Mammary epithelial cell (primary cell): ENCODE measurements at regions of chr12 and their contacts with region 1.

Region 1: GRCh38 chr12:69359531-69360347 is at the start of gene YEATS4:
- DNase-seq: peak; percentile 98
- H3K4me3 ChIP-seq: peak within 1 kb of the TSS; percentile 44 to 77 (median 74)
- H3K27ac ChIP-seq: peak within 1 kb of the TSS; percentile 97
- H3K4me1 ChIP-seq: peaks cover 8% of the 10 kb centered on the region
- H3K27me3 ChIP-seq: no peaks in the 10 kb centered on the region
- CTCF ChIP-seq: no peak
- total RNA-seq, gene YEATS4: 18.2 to 19.7 TPM

Region 2: GRCh38 chr12:69290545-69291277 is 69.0 kb before region 1 on chr12:
- CTCF ChIA-PET with region 1: no interaction called
- dilution Hi-C with region 1: loop called (anchors 5 kb)
- in situ Hi-C with region 1: no loop called
- intact Hi-C with region 1: loop called (anchors 1 kb)
- DNase-seq: peak; percentile 68
- H3K4me3 ChIP-seq: no peak overlapping the region
- H3K27ac ChIP-seq: no peak overlapping the region
- H3K4me1 ChIP-seq: no peaks in the 10 kb centered on the region
- H3K27me3 ChIP-seq: peaks cover 1% of the 10 kb centered on the region
- CTCF ChIP-seq: peak; percentile 98 to 99

Region 3: DNA sequence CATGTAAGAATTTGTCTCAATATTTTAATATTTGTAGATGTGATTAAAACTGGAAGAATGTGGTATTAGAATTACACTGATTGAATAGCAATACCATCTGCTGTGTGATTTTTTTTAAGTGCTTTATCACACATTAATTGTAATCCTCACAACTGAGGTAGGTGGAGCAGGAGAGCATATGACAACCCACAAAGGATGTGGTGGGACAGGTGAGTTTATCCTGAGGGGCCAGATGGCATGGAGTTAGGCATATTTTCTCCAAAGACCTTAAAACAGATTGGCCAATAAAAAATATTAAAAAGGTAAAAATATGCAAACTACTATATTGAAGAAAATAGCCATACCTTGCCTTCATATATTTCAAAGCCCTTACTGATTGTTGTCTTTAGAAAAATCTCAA is 243.2 kb after region 1 on chr12:
- CTCF ChIA-PET with region 1: no interaction called
- dilution Hi-C with region 1: no loop called
- in situ Hi-C with region 1: no loop called
- intact Hi-C with region 1: no loop called
- DNase-seq: no peak
- H3K4me3 ChIP-seq: no peak overlapping the region
- H3K27ac ChIP-seq: no peak overlapping the region
- H3K4me1 ChIP-seq: no peaks in the 10 kb centered on the region
- H3K27me3 ChIP-seq: no peaks in the 10 kb centered on the region
- CTCF ChIP-seq: no peak

Region 4: DNA sequence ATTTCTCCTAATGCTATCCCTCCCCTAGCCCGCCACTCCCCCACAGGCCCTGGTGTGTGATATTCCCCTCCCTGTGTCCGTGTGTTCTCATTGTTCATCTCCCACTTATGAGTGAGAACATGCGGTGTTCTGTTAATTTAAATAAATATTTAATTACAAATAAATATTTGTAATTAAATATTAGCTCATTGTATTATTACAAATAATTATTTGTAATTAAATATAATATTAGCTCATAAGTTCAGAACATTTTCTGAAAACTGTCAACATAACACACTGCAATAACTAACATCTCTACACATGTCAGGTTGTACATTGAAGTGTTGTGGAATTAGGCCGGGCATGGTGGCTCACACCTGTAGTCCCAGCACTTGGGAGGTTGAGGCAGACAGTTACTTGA is 384.4 kb after region 1 on chr12:
- CTCF ChIA-PET with region 1: interaction called, 22 read pairs
- dilution Hi-C with region 1: no loop called
- in situ Hi-C with region 1: no loop called
- intact Hi-C with region 1: no loop called
- DNase-seq: no peak
- H3K4me3 ChIP-seq: no peak overlapping the region
- H3K27ac ChIP-seq: no peak overlapping the region
- H3K4me1 ChIP-seq: peaks cover 3% of the 10 kb centered on the region
- H3K27me3 ChIP-seq: no peaks in the 10 kb centered on the region
- CTCF ChIP-seq: no peak